Esophagus squamous epithelium (tissue), 5 donors: ENCODE measurements at regions of chr5 and their contacts with region 1.

Region 1: DNA sequence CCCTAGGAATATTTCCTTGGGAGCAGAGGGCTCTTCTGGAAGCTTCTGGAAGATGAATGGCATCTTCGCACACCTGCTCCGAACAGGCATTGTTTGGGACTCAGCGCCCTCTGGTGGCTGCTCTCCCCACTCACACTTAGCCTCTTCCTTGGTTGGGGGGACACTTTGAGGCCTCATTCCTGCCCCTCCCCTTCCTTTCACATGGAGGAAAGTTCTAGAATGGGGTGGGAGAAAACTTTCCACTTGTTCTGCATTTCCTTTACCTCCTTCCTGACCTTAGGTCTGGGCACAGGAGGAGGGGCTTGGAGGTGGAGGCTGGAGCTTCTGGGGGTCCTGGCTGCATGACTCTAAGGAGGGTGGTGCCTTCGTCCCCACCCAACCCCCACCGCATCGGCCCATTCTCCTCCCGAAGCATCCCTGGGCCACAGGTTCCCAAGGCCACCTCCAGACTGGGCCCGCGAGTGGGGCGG is 19.3 kb upstream of the SMIM32 start:
- DNase-seq: no peak
- H3K4me3 ChIP-seq: no peak overlapping the region
- H3K27ac ChIP-seq: no peak overlapping the region
- H3K4me1 ChIP-seq: no peaks in the 10 kb centered on the region
- H3K27me3 ChIP-seq: peaks cover 0 to 75% (median 0%) of the 10 kb centered on the region in 4 donors
- CTCF ChIP-seq: peak; percentile 58 to 90 (median 82)
- POLR2A ChIP-seq: no peak

Region 2: DNA sequence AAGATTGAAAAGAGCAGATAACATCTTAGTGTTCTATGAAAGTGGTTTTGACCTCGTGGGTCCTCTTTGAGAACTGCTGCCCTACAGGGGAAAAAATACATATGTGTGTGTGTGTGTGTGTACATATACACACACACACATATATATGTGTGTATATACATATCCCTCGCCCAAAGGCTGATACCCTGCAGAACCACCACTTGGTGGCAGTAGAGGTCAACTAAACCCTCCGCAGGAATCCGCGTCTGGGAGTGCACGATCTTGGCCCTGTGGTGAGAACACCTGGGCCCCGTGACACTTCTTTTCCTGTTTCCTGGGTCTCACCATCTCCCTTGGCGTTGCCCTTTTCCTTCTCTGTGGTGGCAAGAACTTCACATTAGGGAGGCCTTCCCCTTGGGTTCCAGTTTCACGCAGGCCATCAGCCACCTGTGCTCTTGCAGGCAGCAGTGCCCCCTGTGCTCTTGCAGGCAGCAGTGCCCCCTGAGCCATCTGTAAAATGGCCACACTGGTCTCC is 324.9 kb before region 1 on chr5:
- intact Hi-C with region 1: loop called (anchors 5 kb)
- DNase-seq: no peak
- H3K4me3 ChIP-seq: no peak overlapping the region
- H3K27ac ChIP-seq: no peak overlapping the region
- H3K4me1 ChIP-seq: peaks cover 0 to 28% (median 7%) of the 10 kb centered on the region in 3 donors
- H3K27me3 ChIP-seq: peaks cover 0 to 29% (median 0%) of the 10 kb centered on the region in 4 donors
- CTCF ChIP-seq: peak; percentile 19 to 86 (median 76)
- POLR2A ChIP-seq: no peak

Region 3: DNA sequence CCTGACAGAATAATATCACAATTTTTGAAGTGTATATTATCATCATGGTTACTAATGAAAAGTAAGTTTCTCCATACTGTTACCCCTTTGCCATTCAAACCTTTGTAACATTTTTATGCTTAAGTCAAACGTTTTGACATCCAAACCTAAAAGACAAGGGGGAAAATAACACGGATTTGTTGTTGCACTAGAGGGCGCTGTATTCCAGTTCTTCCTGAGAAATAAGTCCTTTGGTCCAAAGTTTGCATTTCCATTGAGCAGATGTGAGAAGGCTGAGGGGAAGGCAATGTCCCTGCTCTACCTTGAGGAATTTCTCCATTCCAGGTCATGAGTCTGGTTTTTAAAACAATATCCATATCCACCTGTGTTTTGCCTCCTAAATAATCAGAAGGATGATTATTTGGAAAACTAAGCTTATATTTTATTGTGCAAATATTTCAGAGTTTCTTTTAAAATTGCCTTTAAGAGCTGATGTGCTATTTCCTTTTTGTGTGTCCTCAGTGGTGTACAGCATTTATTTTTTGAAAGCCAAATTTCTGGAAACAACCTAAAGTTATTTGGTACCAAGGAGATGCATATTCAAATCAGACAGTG is 267.2 kb before region 1 on chr5:
- intact Hi-C with region 1: loop called (anchors 5 kb)
- DNase-seq: no peak
- H3K4me3 ChIP-seq: no peak overlapping the region
- H3K27ac ChIP-seq: no peak overlapping the region
- H3K4me1 ChIP-seq: no peaks in the 10 kb centered on the region
- H3K27me3 ChIP-seq: peaks cover 0 to 10% (median 0%) of the 10 kb centered on the region in 4 donors
- CTCF ChIP-seq: peak; percentile 35 to 80 (median 72)
- POLR2A ChIP-seq: no peak

Region 4: GRCh38 chr5:136484808-136485325 is 272.6 kb after region 1 on chr5:
- intact Hi-C with region 1: no loop called
- DNase-seq: no peak
- H3K4me3 ChIP-seq: no peak overlapping the region
- H3K27ac ChIP-seq: no peak overlapping the region
- H3K4me1 ChIP-seq: no peaks in the 10 kb centered on the region
- H3K27me3 ChIP-seq: peaks cover 0 to 3% (median 0%) of the 10 kb centered on the region in 4 donors
- CTCF ChIP-seq: no peak
- POLR2A ChIP-seq: no peak